PC-3 (cell line): ENCODE measurements at regions of chr14 and their contacts with region 1.

Region 1: DNA sequence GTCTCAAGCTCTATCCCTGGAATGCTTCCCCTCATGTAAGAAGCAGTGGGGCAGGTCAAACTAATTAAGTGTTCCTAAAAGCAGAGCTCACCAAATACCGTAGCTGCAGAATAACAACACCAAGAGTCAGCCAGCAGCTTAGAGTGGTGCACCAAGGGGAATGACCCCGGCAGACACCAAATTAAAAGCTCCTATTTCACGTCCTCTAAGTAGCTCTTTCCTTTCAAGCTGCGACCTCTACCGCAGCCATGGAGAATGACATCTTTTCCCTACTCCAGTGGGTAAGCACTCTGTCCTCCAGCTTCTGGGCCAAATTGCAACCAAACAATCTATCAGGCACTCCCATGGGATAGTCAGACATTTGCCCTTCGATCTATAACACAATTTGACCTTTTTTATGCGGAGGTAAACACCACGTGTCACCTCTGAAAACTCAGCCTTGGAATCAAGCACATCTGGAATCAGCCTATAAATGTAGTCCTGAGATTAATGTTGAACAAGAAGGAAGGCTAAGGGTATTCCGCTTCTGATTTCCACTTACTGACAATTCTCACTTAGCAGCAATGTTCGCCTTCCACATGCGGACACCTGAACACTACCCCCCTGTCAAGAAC is 67.6 kb upstream of the CDKN3 start:
- DNase-seq: peak; percentile 96
- ATAC-seq: peak; percentile 98
- H3K4me3 ChIP-seq: no peak overlapping the region
- H3K27ac ChIP-seq: no peak overlapping the region
- H3K4me1 ChIP-seq: peaks cover 17% of the 10 kb centered on the region
- H3K27me3 ChIP-seq: no peaks in the 10 kb centered on the region
- CTCF ChIP-seq: peak; percentile 100

Region 2: GRCh38 chr14:54025661-54026060 is 303.5 kb before region 1 on chr14:
- CTCF ChIA-PET with region 1: interaction called, 3 read pairs
- POLR2A ChIA-PET with region 1: no interaction called
- intact Hi-C with region 1: loop called (anchors 1 kb)
- DNase-seq: peak; percentile 94
- ATAC-seq: peak; percentile 96
- H3K4me3 ChIP-seq: no peak overlapping the region
- H3K27ac ChIP-seq: no peak overlapping the region
- H3K4me1 ChIP-seq: peaks cover 13% of the 10 kb centered on the region
- H3K27me3 ChIP-seq: no peaks in the 10 kb centered on the region
- CTCF ChIP-seq: peak; percentile 97

Region 3: DNA sequence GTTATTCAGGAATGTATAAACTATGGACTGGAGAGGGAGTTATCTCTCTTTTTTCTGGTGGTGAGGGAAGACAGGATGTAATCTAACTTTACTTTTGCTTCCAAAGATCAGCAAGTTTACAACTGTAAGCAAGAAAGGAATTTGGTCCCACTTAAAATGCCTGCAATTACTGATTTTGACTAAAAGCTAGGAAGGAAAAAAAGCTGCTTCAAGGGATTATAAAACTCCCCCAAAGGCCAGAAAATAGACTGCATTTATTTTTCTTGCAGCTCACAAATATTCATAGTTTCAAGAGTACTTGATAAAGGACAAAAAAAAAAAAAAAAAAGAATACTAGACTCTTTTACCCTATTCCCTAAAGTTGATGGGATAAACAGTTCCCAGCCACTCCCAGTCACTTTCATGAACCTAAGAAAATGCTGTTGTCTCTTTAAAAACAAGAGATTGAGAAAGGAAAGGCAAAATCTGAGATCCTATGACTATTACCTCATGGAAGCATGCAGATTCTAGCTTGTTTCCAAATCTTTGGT is 243.9 kb before region 1 on chr14:
- CTCF ChIA-PET with region 1: interaction called, 3 read pairs
- POLR2A ChIA-PET with region 1: no interaction called
- intact Hi-C with region 1: loop called (anchors 1 kb)
- DNase-seq: no peak
- ATAC-seq: no peak
- H3K4me3 ChIP-seq: no peak overlapping the region
- H3K27ac ChIP-seq: no peak overlapping the region
- H3K4me1 ChIP-seq: no peaks in the 10 kb centered on the region
- H3K27me3 ChIP-seq: no peaks in the 10 kb centered on the region
- CTCF ChIP-seq: no peak

Region 4: GRCh38 chr14:54169254-54169924 is 159.8 kb before region 1 on chr14:
- CTCF ChIA-PET with region 1: interaction called, 28 read pairs
- POLR2A ChIA-PET with region 1: no interaction called
- intact Hi-C with region 1: no loop called
- DNase-seq: peak; percentile 100
- ATAC-seq: peak; percentile 85
- H3K4me3 ChIP-seq: peak overlapping the region; percentile 8; the same call in 1 of the 2 replicates
- H3K27ac ChIP-seq: peak overlapping the region; percentile 86
- H3K4me1 ChIP-seq: peaks cover 76% of the 10 kb centered on the region
- H3K27me3 ChIP-seq: no peaks in the 10 kb centered on the region
- CTCF ChIP-seq: peak; percentile 31; the same call in 1 of the 2 replicates

Region 5: GRCh38 chr14:54182419-54183045 is 146.7 kb before region 1 on chr14:
- CTCF ChIA-PET with region 1: interaction called, 26 read pairs
- POLR2A ChIA-PET with region 1: no interaction called
- intact Hi-C with region 1: no loop called
- DNase-seq: peak; percentile 96
- ATAC-seq: peak; percentile 82
- H3K4me3 ChIP-seq: no peak overlapping the region
- H3K27ac ChIP-seq: peak overlapping the region; percentile 73
- H3K4me1 ChIP-seq: peaks cover 27% of the 10 kb centered on the region
- H3K27me3 ChIP-seq: no peaks in the 10 kb centered on the region
- CTCF ChIP-seq: no peak

Region 6: GRCh38 chr14:54312140-54312801 is 16.9 kb before region 1 on chr14:
- CTCF ChIA-PET with region 1: interaction called, 14 read pairs
- POLR2A ChIA-PET with region 1: interaction called, 3 read pairs
- intact Hi-C with region 1: loop called (anchors 1 kb)
- DNase-seq: peak; percentile 100
- ATAC-seq: peak; percentile 93
- H3K4me3 ChIP-seq: peak overlapping the region; percentile 3; the same call in 1 of the 2 replicates
- H3K27ac ChIP-seq: peak overlapping the region; percentile 66
- H3K4me1 ChIP-seq: peaks cover 53% of the 10 kb centered on the region
- H3K27me3 ChIP-seq: no peaks in the 10 kb centered on the region
- CTCF ChIP-seq: no peak

Region 7: DNA sequence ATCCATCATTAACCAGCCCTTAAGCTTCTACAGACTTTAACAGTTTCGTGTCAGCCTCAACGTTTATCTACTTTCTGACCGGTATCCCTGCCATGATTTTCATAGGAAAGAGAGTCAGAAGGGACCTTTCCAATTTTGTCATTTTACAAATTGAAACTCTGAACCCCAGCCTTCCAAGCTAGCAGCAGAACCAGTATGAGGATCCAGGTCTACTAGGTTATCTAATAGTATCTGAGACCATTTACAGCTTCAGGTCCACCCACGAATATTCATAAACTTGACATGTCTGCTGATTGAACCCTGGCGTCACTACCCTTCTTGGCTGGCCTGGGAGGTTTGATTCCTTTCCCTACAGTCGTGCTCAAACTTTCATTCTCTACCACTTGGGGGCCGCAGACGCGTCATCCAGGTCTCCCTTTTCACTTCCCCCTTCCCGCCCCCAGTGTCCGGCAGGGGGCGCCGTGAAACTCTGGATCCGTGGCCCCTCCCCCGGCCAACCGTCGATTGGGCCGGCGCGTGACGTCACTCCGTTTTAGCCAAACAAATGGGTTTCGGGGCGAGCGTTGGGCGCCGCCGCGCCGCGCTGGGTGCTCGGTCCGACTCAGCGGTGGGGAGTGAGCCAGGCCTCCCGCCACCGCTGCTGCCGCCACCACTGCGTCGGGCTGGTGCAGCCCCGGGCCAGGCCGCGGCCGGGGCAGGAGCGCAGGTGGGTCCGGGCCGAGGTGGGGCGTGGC is 941.8 kb after region 1 on chr14 and contains the start of gene FBXO34:
- CTCF ChIA-PET with region 1: no interaction called
- POLR2A ChIA-PET with region 1: no interaction called
- intact Hi-C with region 1: no loop called
- DNase-seq: peak; percentile 100
- ATAC-seq: peak; percentile 89
- H3K4me3 ChIP-seq: peak within 1 kb of the TSS; percentile 94
- H3K27ac ChIP-seq: peak within 1 kb of the TSS; percentile 15
- H3K4me1 ChIP-seq: peaks cover 33% of the 10 kb centered on the region
- H3K27me3 ChIP-seq: no peaks in the 10 kb centered on the region
- CTCF ChIP-seq: peak; percentile 100
- total RNA-seq, gene FBXO34: 33.6 and 35.9 TPM in 2 replicates